Activated CD4-positive, alpha-beta T cell treated with anti-CD3 and anti-CD28 coated beads, Interleukin-2, amount 10 ng/mL, durations not matched to agents 24 days and 14 days (primary cell): ENCODE measurements at regions of chrX and their contacts with region 1.

Region 1: GRCh38 chrX:130975947-130976346 is 72.9 kb upstream of the ENOX2 start:
- DNase-seq: peak; percentile 74
- H3K4me3 Mint-ChIP-seq: no peak overlapping the region
- H3K27ac Mint-ChIP-seq: no peak overlapping the region
- H3K4me1 Mint-ChIP-seq: no peaks in the 10 kb centered on the region
- H3K27me3 Mint-ChIP-seq: peaks cover 2% of the 10 kb centered on the region

Region 2: GRCh38 chrX:130413415-130413814 is 562.5 kb before region 1 on chrX:
- intact Hi-C with region 1: no loop called
- DNase-seq: no peak
- H3K4me3 Mint-ChIP-seq: no peak overlapping the region
- H3K27ac Mint-ChIP-seq: no peak overlapping the region
- H3K4me1 Mint-ChIP-seq: no peaks in the 10 kb centered on the region
- H3K27me3 Mint-ChIP-seq: no peaks in the 10 kb centered on the region

Region 3: DNA sequence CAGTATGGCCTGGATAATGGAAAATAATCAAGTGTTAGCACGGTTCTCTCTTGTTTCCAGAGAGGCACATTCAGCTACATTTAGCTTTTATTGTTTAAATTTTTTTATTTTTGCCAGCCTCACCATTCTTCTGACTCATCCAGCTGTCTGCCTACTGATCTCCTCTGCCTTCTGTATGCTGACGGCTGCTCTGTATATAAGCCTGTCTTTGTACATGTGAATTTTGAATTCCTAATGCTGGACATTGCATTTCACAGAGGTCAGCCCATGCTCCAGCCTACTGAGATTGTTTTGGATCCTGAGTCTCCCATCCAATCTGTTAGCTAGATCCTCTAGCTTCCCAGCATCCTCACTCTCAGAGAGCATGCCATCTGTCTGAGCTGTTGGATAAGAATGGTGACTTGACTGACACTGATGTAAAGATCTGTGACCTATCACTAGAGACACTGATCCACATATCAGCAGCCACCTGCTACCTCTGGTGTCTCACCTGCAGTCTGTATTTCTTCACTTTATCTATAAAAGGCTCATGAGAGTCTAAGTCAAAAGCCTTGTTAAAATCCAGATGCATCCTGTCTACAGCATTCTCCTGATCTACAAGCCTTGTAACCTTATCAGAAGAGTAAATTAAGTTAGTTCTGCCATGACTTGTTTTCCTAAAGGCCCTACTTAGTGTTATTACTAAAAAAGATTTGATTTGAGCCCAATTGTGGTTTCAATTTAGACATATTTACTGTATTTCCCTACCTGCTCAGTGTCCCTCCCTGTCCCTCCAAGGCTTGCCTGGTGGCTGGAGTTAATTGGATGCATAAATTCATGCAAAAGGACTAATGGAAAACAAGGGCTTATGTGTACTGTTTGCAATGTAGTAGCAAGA is 56.6 kb after region 1 on chrX:
- intact Hi-C with region 1: no loop called
- DNase-seq: no peak
- H3K4me3 Mint-ChIP-seq: no peak overlapping the region
- H3K27ac Mint-ChIP-seq: no peak overlapping the region
- H3K4me1 Mint-ChIP-seq: no peaks in the 10 kb centered on the region
- H3K27me3 Mint-ChIP-seq: peaks cover 3% of the 10 kb centered on the region

Region 4: DNA sequence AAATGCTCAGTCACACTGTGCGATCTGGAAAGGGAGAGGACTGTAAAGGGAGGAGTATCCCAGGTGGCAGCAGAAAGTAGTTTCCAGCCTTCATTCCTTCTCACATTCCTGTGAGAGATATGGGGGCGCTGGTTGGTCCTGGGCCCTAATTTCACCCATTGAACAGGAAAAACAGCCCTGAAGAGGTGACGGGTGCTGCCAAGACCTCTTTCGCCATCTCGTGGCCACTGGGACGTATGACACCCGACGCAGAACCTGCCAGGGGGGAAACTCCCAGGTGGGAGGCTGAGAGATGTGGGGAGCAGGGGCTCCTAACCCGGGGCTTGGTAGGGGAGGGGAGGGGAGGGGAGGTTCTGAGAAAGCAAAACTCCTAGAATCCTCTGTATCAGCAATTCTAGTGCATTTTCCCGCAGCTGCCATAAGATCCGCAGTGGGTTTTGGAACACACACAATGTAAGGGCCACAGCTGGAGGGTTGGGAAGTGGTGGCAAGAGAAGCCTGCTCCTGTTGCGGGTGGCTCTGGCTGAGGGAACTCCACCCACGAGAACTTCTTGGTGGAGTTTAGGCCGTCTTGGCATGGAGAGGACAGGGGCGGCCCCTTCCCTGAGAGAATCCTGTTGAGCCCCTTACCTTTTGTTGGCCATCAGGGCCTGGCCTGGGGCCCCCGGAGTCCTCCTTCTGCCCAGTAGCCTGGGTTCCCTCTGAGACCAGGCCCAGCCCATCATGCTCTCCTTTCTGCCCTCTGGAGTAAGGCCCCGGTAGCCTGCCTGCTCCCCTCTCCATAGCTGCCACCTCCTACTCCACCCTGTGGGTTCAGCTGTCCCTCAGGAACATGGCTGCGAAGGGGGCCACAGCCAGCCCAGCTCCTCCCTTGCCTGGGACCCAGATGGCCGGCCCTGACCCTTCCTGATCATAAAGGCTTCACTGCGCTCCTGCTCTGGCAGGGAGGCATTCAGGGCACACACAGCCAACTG is 702.0 kb after region 1 on chrX:
- intact Hi-C with region 1: loop called (anchors 1 kb)
- DNase-seq: peak; percentile 78
- H3K4me3 Mint-ChIP-seq: no peak overlapping the region
- H3K27ac Mint-ChIP-seq: no peak overlapping the region
- H3K4me1 Mint-ChIP-seq: no peaks in the 10 kb centered on the region
- H3K27me3 Mint-ChIP-seq: peaks cover 2% of the 10 kb centered on the region

Region 5: GRCh38 chrX:131812836-131813825 is 837.2 kb after region 1 on chrX:
- intact Hi-C with region 1: loop called (anchors 10 kb)
- DNase-seq: peak; percentile 93
- H3K4me3 Mint-ChIP-seq: peak overlapping the region; percentile 77
- H3K27ac Mint-ChIP-seq: peak overlapping the region; percentile 84
- H3K4me1 Mint-ChIP-seq: peaks cover 25% of the 10 kb centered on the region
- H3K27me3 Mint-ChIP-seq: no peaks in the 10 kb centered on the region

Region 6: GRCh38 chrX:132022967-132023895 is 1047.3 kb after region 1 on chrX and contains the start of gene STK26:
- intact Hi-C with region 1: no loop called
- DNase-seq: peak; percentile 94
- H3K4me3 Mint-ChIP-seq: peak within 1 kb of the TSS; percentile 95
- H3K27ac Mint-ChIP-seq: peak within 1 kb of the TSS; percentile 95
- H3K4me1 Mint-ChIP-seq: peaks cover 15% of the 10 kb centered on the region
- H3K27me3 Mint-ChIP-seq: no peaks in the 10 kb centered on the region
- total RNA-seq, gene STK26: 66.0 and 72.5 TPM in 2 replicates